A673 (cell line): ENCODE measurements at regions of chr2 and their contacts with region 1.

Region 1: GRCh38 chr2:100730346-100730745 is 89.6 kb upstream of the NPAS2 start:
- DNase-seq: peak; percentile 80
- H3K4me3 ChIP-seq: no peak overlapping the region
- H3K27ac ChIP-seq: no peak overlapping the region
- H3K4me1 ChIP-seq: peaks cover 9% of the 10 kb centered on the region
- H3K27me3 ChIP-seq: no peaks in the 10 kb centered on the region
- CTCF ChIP-seq: peak; percentile 77

Region 2: GRCh38 chr2:100610381-100610831 is 119.9 kb before region 1 on chr2:
- CTCF ChIA-PET with region 1: no interaction called
- POLR2A ChIA-PET with region 1: no interaction called
- intact Hi-C with region 1: loop called (anchors 5 kb)
- DNase-seq: peak; percentile 78
- H3K4me3 ChIP-seq: no peak overlapping the region
- H3K27ac ChIP-seq: no peak overlapping the region
- H3K4me1 ChIP-seq: no peaks in the 10 kb centered on the region
- H3K27me3 ChIP-seq: no peaks in the 10 kb centered on the region
- CTCF ChIP-seq: peak; percentile 76

Region 3: DNA sequence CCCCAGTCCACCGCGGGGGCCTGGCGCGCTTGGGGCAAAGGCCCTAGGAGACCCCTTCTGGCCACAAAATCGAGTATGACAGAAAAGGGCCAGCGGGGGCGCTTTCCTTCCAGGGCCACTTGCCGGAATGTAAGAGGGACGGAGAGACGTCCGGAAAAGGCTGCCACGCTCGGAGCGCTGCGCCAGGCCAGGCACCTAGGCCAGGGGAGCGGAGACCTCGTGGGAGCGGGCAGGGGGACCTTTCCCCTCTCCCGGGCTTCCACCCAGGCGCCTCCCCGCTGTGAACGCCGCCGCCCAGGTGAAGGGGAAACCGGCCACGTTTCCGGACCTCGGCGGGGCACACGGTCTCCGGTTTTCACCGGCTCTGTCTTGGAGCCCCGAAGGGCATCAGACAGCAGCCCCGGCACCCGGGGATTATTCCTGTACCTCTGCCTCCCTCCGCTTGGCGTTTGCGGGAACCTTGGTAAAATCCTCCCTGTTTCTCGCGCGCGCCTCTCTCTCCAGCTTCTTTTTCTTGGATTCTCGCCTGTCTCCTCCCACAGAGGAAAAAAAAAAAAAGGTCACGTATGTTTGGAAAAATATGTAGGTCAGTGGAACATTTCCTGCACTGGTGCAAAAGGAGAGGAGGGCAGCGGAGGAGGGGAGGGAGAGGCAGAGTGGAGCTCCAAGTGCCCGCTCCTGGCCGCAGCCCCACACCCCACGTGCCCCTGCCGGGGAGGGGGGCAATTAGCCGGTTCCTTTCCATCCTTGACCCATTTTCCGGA is 88.4 kb after region 1 on chr2:
- CTCF ChIA-PET with region 1: interaction called, 4 read pairs
- POLR2A ChIA-PET with region 1: no interaction called
- intact Hi-C with region 1: loop called (anchors 5 kb)
- DNase-seq: peak; percentile 39
- H3K4me3 ChIP-seq: peak overlapping the region; percentile 62
- H3K27ac ChIP-seq: no peak overlapping the region
- H3K4me1 ChIP-seq: peaks cover 7% of the 10 kb centered on the region
- H3K27me3 ChIP-seq: peaks cover 48% of the 10 kb centered on the region
- CTCF ChIP-seq: 0 out of 2 replicates have a peak, but pooled peaks have one; percentile 27

Region 4: DNA sequence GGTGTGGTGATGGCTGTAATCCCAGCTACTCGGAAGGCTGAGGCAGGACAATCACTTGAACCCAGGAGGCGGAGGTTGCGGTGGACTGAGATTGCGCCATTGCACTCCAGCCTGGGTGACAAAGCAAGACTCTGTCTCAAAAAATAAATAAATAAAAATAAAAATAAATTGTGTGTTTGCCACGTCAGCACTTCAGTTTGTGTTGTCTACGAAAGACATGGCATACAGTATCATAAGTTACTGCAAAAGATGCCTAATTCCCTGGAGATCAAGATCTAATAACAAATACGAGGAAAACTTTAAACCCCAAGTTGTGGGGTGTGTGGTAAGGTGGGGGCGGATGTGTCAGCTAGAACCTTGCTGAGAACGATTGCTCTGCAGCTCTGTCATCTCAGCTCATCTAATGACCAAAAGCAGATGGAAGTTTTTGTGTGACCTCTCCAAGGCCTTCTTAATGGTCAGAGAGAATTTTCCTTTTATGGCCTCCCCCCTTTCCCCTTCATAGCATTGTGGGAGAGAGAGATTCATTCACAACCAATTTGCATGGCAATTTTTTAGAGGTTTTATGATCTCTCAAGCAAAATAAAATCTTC is 100.9 kb after region 1 on chr2:
- CTCF ChIA-PET with region 1: no interaction called
- POLR2A ChIA-PET with region 1: no interaction called
- intact Hi-C with region 1: no loop called
- DNase-seq: no peak
- H3K4me3 ChIP-seq: no peak overlapping the region
- H3K27ac ChIP-seq: no peak overlapping the region
- H3K4me1 ChIP-seq: no peaks in the 10 kb centered on the region
- H3K27me3 ChIP-seq: no peaks in the 10 kb centered on the region
- CTCF ChIP-seq: no peak

Region 5: DNA sequence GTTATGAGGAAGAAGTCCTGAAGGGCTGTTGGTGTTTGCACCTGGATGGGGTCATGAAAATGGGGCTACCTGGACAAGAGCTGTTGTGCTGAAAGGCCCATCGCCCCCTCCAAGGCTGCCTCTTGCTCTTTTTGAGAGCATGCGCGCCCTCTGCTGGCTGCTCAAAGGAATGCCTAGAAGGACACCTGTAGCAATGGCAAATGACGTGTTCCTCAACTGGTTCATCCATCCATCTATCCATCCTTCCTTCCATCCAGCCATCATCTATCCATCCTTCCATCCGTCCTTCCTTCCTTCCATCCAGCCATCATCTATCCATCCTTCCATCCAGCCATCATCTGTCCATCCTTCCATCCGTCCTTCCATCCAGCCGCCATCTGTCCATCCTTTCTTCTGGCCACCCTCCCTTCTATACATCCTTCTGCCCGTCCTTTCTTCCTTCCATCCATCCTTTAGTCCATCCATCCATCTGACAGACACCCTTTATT is 254.6 kb after region 1 on chr2:
- CTCF ChIA-PET with region 1: interaction called, 8 read pairs
- POLR2A ChIA-PET with region 1: no interaction called
- intact Hi-C with region 1: loop called (anchors 1 kb)
- DNase-seq: peak; percentile 79
- H3K4me3 ChIP-seq: no peak overlapping the region
- H3K27ac ChIP-seq: no peak overlapping the region
- H3K4me1 ChIP-seq: no peaks in the 10 kb centered on the region
- H3K27me3 ChIP-seq: no peaks in the 10 kb centered on the region
- CTCF ChIP-seq: peak; percentile 88

Region 6: GRCh38 chr2:101030863-101031554 is 300.7 kb after region 1 on chr2:
- CTCF ChIA-PET with region 1: no interaction called
- POLR2A ChIA-PET with region 1: no interaction called
- intact Hi-C with region 1: no loop called
- DNase-seq: no peak
- H3K4me3 ChIP-seq: no peak overlapping the region
- H3K27ac ChIP-seq: no peak overlapping the region
- H3K4me1 ChIP-seq: no peaks in the 10 kb centered on the region
- H3K27me3 ChIP-seq: no peaks in the 10 kb centered on the region
- CTCF ChIP-seq: no peak